ENCODE measurements at regions of chr3 and their contacts with region 1.

Region 1: GRCh38 chr3:150227839-150228238 is 180.3 kb upstream of the TSC22D2 start:
- H3K4me3 ChIP-seq: no peak overlapping the region
- H3K27ac ChIP-seq: no peak overlapping the region
- H3K4me1 ChIP-seq: no peaks in the 10 kb centered on the region
- CTCF ChIP-seq: peak; percentile 27; the same call in 1 of the 2 replicates

Region 2: DNA sequence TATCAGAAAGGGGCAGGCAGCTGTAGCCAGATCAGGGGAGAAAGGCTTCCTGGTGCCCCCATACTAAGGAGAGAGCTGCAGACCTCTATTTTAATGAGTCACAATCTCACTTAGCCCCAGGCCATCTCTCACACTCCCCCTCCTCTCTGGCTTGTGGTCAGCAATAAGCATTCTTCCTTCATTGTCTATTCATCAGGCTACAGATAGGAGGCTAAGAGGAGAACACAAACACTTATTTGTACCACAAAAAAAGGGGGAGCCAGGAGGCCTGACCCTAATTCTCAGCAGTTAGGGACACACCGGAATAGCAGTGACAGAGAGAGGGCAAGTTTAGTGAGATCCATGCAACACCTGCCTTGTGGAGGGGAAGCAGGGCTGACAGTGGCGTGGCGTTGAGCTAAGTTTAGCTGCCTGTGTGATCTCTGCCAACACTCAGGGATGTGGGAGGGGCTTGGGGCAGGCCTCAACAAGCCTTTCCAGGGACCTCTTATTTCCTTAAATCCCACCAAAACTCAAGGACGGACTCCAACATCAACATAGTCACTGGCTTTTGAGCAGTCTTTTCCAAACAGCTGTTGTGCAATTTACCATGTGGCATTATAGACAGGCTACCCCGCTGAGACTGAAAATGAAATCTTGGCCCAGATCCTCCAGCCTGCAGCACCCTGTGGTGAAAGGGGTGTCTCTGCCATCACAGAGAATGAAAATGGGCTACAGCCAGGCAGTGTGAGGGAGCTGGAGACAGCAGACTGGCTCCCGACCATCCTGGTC is 11.6 kb before region 1 on chr3:
- CTCF ChIA-PET with region 1: interaction called, 11 read pairs
- POLR2A ChIA-PET with region 1: no interaction called
- H3K4me3 ChIP-seq: peak overlapping the region; percentile 14; the same call in 1 of the 2 replicates
- H3K27ac ChIP-seq: peak overlapping the region; percentile 37; the same call in 1 of the 2 replicates
- H3K4me1 ChIP-seq: no peaks in the 10 kb centered on the region; the same call in 1 of the 2 replicates
- CTCF ChIP-seq: no peak

Region 3: DNA sequence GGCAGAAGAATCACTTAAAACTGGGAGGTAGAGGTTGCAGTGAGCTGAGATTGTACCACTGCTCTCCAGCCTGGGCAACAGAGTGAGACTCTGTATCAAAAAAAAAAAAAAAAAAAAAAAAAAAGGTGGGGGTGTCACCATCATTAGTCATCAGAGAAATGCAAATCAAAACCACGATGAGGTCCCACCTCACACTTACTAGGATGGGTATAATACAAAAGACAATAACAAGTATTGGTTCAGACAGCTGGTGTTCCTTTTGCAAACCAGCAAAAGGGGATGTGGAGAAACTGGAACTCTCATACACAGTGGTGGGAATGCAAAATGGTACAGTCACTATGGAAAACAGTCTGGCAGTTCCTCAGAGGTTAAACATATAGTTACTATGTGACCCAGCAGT is 101.6 kb after region 1 on chr3:
- CTCF ChIA-PET with region 1: no interaction called
- POLR2A ChIA-PET with region 1: no interaction called
- H3K4me3 ChIP-seq: no peak overlapping the region
- H3K27ac ChIP-seq: no peak overlapping the region
- H3K4me1 ChIP-seq: no peaks in the 10 kb centered on the region
- CTCF ChIP-seq: no peak

Region 4: DNA sequence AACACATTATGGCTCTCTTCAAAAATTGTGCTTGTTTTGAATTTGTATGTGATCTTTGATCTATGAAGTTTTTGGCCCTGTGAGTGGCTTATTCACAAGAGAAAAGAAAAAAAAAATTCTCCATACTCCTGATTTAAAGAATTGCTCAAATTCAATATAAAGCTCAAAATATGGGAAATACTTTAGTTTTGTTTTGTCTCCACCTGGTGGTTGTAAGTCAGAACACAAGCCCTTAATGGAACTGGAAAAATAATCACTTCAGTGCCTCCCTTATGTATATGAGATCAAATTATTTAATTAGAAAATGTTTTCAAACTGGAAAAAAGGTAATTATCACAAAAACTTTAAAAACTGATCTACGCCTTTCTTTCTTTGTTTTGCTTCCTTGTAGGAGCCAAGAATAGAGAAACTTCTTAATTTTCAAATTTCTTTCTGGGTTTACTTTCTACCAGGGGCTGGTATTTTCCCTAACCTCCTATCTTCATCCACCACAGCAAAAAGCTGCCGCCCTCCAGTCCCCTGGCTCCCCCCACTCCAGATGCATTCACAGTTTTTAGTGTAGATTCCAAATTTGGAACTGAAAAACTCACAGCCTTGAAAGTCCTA is 267.8 kb after region 1 on chr3:
- CTCF ChIA-PET with region 1: interaction called, 17 read pairs
- POLR2A ChIA-PET with region 1: no interaction called
- H3K4me3 ChIP-seq: no peak overlapping the region
- H3K27ac ChIP-seq: no peak overlapping the region
- H3K4me1 ChIP-seq: no peaks in the 10 kb centered on the region
- CTCF ChIP-seq: no peak